Dendritic cell treated with granulocyte-macrophage colony-stimulating factor and Interleukin-4, amounts not matched to agents 40 ng/mL and 50 ng/mL, for 4 days (primary cell): ENCODE measurements at regions of chr2 and their contacts with region 1.

Region 1: GRCh38 chr2:134411828-134412638 is 158.2 kb downstream of the MGAT5 start:
- H3K4me3 Mint-ChIP-seq: no peak overlapping the region
- H3K27ac Mint-ChIP-seq: no peak overlapping the region
- H3K4me1 Mint-ChIP-seq: peaks cover 15% of the 10 kb centered on the region
- H3K27me3 Mint-ChIP-seq: no peaks in the 10 kb centered on the region

Region 2: GRCh38 chr2:134261398-134262131 is 150.5 kb before region 1 on chr2:
- intact Hi-C with region 1: loop called (anchors 10 kb)
- H3K4me3 Mint-ChIP-seq: no peak overlapping the region
- H3K27ac Mint-ChIP-seq: no peak overlapping the region
- H3K4me1 Mint-ChIP-seq: peaks cover 40% of the 10 kb centered on the region
- H3K27me3 Mint-ChIP-seq: no peaks in the 10 kb centered on the region